ENCODE measurements at regions of chr21 and their contacts with region 1.

Region 1: DNA sequence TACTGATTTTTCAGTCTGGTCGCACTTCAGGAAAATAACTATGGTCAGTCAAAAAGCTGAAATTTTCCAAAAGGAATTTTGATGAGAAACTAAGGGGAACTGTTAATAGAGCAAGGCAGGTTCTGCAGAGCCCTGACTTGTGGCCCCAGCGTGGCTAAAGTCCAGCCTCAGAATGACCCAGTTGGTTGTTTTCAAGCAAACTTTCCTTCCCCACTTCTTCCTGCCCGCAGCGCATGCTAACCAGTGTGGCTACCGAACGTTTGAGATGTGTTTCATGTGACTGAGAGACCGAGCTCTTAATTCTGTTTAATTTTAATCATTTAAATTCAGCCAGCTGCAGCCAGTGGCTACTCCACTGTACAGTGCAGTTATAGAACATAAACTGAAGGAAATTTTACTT is 6.2 kb upstream of the IL10RB start:
- DNase-seq: peak in 1 of 9 experiments; percentile 33
- ATAC-seq: peak; percentile 34
- H3K4me3 ChIP-seq: no peak overlapping the region
- H3K4me3 Mint-ChIP-seq: peak overlapping the region; percentile 54
- H3K27ac ChIP-seq: peak overlapping the region in 1 of 2 experiments; percentile 44
- H3K27ac Mint-ChIP-seq: peak overlapping the region; percentile 82
- H3K4me1 ChIP-seq: peaks cover 27% of the 10 kb centered on the region
- H3K4me1 Mint-ChIP-seq: peaks cover 52% of the 10 kb centered on the region
- H3K27me3 ChIP-seq: no peaks in the 10 kb centered on the region
- H3K27me3 Mint-ChIP-seq: no peaks in the 10 kb centered on the region
- CTCF ChIP-seq: no peak

Region 2: DNA sequence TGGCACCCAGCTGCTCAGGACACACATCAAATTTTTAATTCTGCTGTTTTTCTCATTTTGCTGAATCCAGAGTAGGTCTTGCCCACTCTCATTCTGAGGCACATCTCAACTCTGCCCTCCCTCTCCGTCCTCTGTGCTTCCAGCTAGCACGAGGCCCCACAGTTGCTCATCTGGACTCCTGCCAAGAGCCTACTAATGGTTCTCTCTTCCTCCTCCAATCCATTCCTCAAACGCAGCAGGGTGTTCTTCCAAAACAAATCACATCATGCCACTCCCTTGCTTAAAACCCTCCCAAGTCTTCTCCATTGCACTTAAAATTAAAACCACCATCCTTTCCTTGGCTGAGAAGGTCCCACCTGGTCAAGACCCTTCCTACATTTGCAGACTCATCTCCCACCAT is 1478.3 kb before region 1 on chr21:
- CTCF ChIA-PET with region 1: no interaction called
- POLR2A ChIA-PET with region 1: no interaction called
- intact Hi-C with region 1: no loop called
- DNase-seq: no peak
- ATAC-seq: no peak
- H3K4me3 ChIP-seq: no peak overlapping the region
- H3K4me3 Mint-ChIP-seq: no peak overlapping the region
- H3K27ac ChIP-seq: no peak overlapping the region
- H3K27ac Mint-ChIP-seq: no peak overlapping the region
- H3K4me1 ChIP-seq: no peaks in the 10 kb centered on the region
- H3K4me1 Mint-ChIP-seq: peaks cover 5% of the 10 kb centered on the region
- H3K27me3 ChIP-seq: no peaks in the 10 kb centered on the region
- H3K27me3 Mint-ChIP-seq: peaks cover 10% of the 10 kb centered on the region
- CTCF ChIP-seq: no peak

Region 3: GRCh38 chr21:32949701-32950100 is 310.3 kb before region 1 on chr21:
- CTCF ChIA-PET with region 1: no interaction called
- POLR2A ChIA-PET with region 1: no interaction called
- intact Hi-C with region 1: no loop called
- DNase-seq: no peak
- ATAC-seq: no peak
- H3K4me3 ChIP-seq: no peak overlapping the region
- H3K4me3 Mint-ChIP-seq: no peak overlapping the region
- H3K27ac ChIP-seq: no peak overlapping the region
- H3K27ac Mint-ChIP-seq: no peak overlapping the region
- H3K4me1 ChIP-seq: no peaks in the 10 kb centered on the region
- H3K4me1 Mint-ChIP-seq: no peaks in the 10 kb centered on the region
- H3K27me3 ChIP-seq: peaks cover 0 to 4% of the 10 kb centered on the region in 2 experiments
- H3K27me3 Mint-ChIP-seq: peaks cover 19% of the 10 kb centered on the region
- CTCF ChIP-seq: no peak

Region 4: GRCh38 chr21:33244082-33244778 is 15.8 kb before region 1 on chr21:
- CTCF ChIA-PET with region 1: no interaction called
- POLR2A ChIA-PET with region 1: interaction called, 6 read pairs
- intact Hi-C with region 1: loop called in 1 of 2 experiments (anchors 2 kb)
- DNase-seq: peak in 1 of 9 experiments; percentile 9
- ATAC-seq: peak; percentile 41
- H3K4me3 ChIP-seq: no peak overlapping the region
- H3K4me3 Mint-ChIP-seq: peak overlapping the region; percentile 68
- H3K27ac ChIP-seq: peak overlapping the region; percentile 9 to 54
- H3K27ac Mint-ChIP-seq: peak overlapping the region; percentile 95
- H3K4me1 ChIP-seq: peaks cover 82% of the 10 kb centered on the region
- H3K4me1 Mint-ChIP-seq: peaks cover 85% of the 10 kb centered on the region
- H3K27me3 ChIP-seq: no peaks in the 10 kb centered on the region
- H3K27me3 Mint-ChIP-seq: no peaks in the 10 kb centered on the region
- CTCF ChIP-seq: no peak

Region 5: DNA sequence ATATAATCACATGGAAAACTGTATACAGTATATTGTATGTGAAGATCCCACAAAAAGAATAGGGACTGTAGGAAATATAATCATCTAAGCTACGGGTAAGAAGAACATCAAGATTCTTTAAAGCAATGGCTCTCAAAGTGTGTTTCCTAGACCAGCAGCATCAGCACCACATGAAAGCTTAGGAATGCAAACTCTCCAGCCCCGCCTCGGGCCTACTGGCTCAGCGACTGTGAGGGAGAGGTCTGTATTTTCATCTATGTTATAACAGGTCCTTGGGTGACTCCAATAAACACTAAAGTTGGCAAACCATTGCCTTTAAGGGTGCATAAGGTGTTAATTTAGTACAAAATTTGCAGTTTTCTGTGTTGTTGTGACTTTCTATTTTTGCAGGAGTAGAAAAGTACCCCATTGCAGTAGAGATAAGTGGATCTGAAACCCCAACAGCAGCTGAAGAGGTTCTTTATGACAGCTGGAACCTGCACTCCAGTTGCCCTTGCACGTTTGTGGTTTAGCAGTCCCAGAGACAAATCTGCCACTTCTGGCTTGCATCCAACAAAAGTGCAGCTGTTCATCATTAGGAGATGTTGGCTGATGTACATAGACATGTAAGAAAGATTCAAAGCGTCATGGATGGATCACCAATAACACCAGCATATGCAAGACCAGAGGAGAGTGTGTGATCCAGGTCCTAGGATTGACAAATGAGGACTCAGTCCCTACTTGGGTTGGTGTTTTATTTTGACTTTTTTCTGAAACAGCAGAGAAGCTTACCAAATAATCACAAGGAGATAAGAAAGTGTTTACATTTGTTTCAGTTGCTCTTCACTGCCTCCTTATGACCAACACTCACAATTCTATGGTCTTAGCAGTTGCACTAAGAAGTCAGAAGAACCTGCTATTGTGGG is 48.8 kb after region 1 on chr21:
- CTCF ChIA-PET with region 1: no interaction called
- POLR2A ChIA-PET with region 1: no interaction called
- intact Hi-C with region 1: no loop called
- DNase-seq: peak in 2 of 9 experiments; percentile 33 to 43
- ATAC-seq: peak; percentile 23
- H3K4me3 ChIP-seq: no peak overlapping the region
- H3K4me3 Mint-ChIP-seq: no peak overlapping the region
- H3K27ac ChIP-seq: no peak overlapping the region
- H3K27ac Mint-ChIP-seq: no peak overlapping the region
- H3K4me1 ChIP-seq: peaks cover 9% of the 10 kb centered on the region
- H3K4me1 Mint-ChIP-seq: peaks cover 10% of the 10 kb centered on the region
- H3K27me3 ChIP-seq: no peaks in the 10 kb centered on the region
- H3K27me3 Mint-ChIP-seq: no peaks in the 10 kb centered on the region
- CTCF ChIP-seq: no peak